ENCODE measurements at regions of chr7 and their contacts with region 1.

Region 1: DNA sequence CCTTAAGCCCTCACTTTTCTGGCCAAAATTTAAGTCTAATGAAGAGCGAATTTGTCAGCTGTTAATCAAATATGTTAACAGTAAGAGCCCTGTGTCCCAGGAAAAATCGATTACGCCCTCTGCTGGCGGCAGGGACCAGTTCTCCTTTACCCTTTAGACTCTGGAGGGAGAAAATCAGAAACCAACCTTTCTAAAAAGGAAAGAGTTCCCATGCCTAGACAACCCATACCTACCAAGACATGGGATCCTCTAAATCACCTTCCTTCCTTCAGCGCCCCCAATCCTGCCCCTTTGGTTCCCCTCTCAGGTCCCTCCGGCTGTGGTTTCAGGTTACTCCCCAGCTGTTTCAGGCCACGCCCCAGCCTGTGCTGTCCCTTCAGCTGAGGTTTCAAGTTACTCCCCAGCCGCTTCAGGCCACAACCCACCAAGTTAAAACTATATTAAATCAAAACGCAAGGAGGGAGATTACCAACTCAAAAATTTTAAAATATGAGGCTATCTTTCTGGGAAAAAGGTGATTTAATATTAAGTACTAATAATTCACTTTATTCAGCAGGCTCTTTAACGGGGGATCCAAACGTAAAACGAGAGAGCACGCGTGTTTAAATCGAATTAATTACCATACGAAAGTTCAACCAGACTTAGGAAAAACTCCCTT is 1.4 kb upstream of the AKR1B15 start:
- DNase-seq: peak; percentile 77 to 82
- ATAC-seq: peak; percentile 78 to 80
- H3K4me3 ChIP-seq: peak overlapping the region; percentile 34 to 54 (median 43)
- H3K27ac ChIP-seq: peak overlapping the region; percentile 73 to 88 (median 82)
- H3K4me1 ChIP-seq: peaks cover 28 to 36% of the 10 kb centered on the region in 2 donors
- H3K27me3 ChIP-seq: no peaks in the 10 kb centered on the region
- CTCF ChIP-seq: peak; percentile 86 to 92 (median 90)
- POLR2A ChIP-seq: no peak

Region 2: GRCh38 chr7:134432296-134433152 is 115.0 kb before region 1 on chr7:
- in situ Hi-C with region 1: no loop called
- intact Hi-C with region 1: loop called (anchors 1 kb)
- DNase-seq: peak; percentile 67 to 81
- ATAC-seq: peak; percentile 99 to 100
- H3K4me3 ChIP-seq: peak overlapping the region; percentile 40 to 65 (median 54)
- H3K27ac ChIP-seq: peak overlapping the region; percentile 75 to 84 (median 82)
- H3K4me1 ChIP-seq: peaks cover 0 to 4% of the 10 kb centered on the region in 2 donors
- H3K27me3 ChIP-seq: no peaks in the 10 kb centered on the region
- CTCF ChIP-seq: peak; percentile 69 to 89 (median 81)
- POLR2A ChIP-seq: peak in 1 of 2 donors; percentile 56

Region 3: DNA sequence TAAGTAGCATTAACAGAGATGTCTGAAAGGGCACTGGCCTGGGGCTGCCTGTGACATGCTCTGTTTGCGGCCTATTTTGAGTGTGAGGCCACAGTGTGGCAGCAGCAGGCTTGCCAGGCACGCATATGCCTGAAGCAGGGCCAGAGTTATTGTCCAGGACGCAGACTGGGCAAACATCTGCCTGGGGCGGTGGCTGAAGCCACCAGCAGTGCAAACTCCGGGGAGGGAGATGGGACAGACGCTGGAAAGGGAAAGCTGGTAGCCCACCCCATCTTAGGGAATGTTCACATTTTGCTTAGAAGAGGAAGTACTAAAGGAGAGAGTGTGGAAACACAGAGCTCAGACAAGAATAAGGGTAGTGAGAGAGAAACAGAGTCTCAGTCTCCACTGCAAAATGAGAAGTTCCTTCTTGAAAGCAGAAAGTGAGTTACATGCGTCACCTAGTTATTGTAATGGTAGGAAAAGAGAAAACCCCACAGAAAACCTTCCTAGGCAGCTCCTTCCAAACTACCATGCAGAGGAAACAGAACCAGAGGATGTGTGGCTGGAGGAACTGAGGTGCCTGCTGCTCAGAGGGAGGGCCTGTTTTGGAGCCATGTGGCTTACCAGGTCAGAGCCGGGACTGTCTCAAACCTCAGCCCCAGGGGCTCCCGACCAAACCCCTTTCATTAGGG is 103.2 kb before region 1 on chr7:
- in situ Hi-C with region 1: loop called in 1 of 4 experiments (anchors 5 kb)
- intact Hi-C with region 1: loop called (anchors 1 kb)
- DNase-seq: peak; percentile 52 to 61
- ATAC-seq: peak; percentile 82
- H3K4me3 ChIP-seq: no peak overlapping the region
- H3K27ac ChIP-seq: peak overlapping the region; percentile 59 to 83 (median 68)
- H3K4me1 ChIP-seq: peaks cover 14 to 38% of the 10 kb centered on the region in 2 donors
- H3K27me3 ChIP-seq: no peaks in the 10 kb centered on the region
- CTCF ChIP-seq: peak in 2 of 5 experiments; percentile 39 to 56
- POLR2A ChIP-seq: no peak

Region 4: DNA sequence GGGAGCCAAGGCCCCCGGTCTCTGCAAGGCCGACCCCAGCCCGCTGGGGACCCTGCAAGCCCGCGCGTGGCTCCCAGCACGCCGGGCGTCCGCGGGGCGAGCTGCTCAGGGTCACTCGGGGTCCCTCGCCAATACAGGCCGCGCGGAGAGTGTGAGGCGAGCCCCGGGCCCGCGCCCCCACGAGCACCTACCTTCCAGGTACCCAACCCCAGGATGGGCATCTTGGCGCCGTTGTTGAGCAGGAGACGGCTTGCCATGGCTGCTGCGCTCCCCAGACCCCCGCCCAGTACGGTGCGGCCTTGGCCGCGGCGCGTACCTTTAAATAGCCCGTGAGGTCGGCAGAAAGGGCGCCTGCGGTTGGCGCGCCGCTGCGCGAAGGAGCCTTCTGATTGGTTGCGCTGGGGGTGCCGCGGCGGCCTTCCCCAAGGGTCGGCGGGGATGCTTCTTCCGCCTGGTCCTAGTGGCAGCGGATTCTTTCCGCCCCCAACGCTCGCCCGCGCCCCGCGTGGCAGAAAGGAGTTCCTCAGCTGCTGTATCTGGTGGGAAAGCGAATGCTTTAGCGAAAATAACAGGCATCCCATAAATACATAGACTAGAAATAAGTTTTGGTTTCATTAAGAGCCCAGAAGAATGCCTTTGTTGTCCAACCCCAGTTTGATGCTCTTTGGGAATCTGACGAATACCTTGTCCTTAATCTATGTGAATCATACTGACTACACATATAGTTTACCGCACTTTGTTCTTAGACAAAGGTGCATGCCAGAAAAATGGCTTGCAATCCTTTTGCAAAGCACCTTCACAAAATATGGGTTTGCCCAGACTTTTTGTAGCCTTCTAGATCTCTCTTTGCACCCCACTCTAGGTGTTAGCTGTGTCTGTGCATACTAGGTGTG is 88.5 kb before region 1 on chr7 and contains the start of gene AKR1B1:
- in situ Hi-C with region 1: no loop called
- intact Hi-C with region 1: loop called (anchors 1 kb)
- DNase-seq: peak; percentile 81 to 92
- ATAC-seq: peak; percentile 93 to 95
- H3K4me3 ChIP-seq: peak within 1 kb of the TSS; percentile 82 to 97 (median 88)
- H3K27ac ChIP-seq: peak within 1 kb of the TSS; percentile 87 to 95 (median 90)
- H3K4me1 ChIP-seq: peaks cover 13 to 26% of the 10 kb centered on the region in 2 donors
- H3K27me3 ChIP-seq: no peaks in the 10 kb centered on the region
- CTCF ChIP-seq: peak; percentile 32 to 57 (median 43)
- POLR2A ChIP-seq: peak; percentile 84
- total RNA-seq, gene AKR1B1: 87.3 to 119 (median 95.6) TPM

Region 5: GRCh38 chr7:134533288-134533771 is 14.2 kb before region 1 on chr7:
- in situ Hi-C with region 1: no loop called
- intact Hi-C with region 1: loop called (anchors 1 kb)
- DNase-seq: peak; percentile 81 to 86
- ATAC-seq: peak; percentile 82 to 83
- H3K4me3 ChIP-seq: no peak overlapping the region
- H3K27ac ChIP-seq: peak overlapping the region; percentile 88 to 92 (median 90)
- H3K4me1 ChIP-seq: peaks cover 51 to 71% of the 10 kb centered on the region in 2 donors
- H3K27me3 ChIP-seq: no peaks in the 10 kb centered on the region
- CTCF ChIP-seq: no peak
- POLR2A ChIP-seq: no peak

Region 6: GRCh38 chr7:134605973-134606923 is 58.7 kb after region 1 on chr7:
- in situ Hi-C with region 1: loop called in 1 of 4 experiments (anchors 5 kb)
- intact Hi-C with region 1: loop called (anchors 2 kb)
- DNase-seq: peak; percentile 34 to 38
- ATAC-seq: peak; percentile 89 to 90
- H3K4me3 ChIP-seq: peak overlapping the region in 2 of 4 donors; percentile 12 to 27
- H3K27ac ChIP-seq: no peak overlapping the region
- H3K4me1 ChIP-seq: no peaks in the 10 kb centered on the region
- H3K27me3 ChIP-seq: no peaks in the 10 kb centered on the region
- CTCF ChIP-seq: peak; percentile 81 to 98 (median 89)
- POLR2A ChIP-seq: no peak

Region 7: DNA sequence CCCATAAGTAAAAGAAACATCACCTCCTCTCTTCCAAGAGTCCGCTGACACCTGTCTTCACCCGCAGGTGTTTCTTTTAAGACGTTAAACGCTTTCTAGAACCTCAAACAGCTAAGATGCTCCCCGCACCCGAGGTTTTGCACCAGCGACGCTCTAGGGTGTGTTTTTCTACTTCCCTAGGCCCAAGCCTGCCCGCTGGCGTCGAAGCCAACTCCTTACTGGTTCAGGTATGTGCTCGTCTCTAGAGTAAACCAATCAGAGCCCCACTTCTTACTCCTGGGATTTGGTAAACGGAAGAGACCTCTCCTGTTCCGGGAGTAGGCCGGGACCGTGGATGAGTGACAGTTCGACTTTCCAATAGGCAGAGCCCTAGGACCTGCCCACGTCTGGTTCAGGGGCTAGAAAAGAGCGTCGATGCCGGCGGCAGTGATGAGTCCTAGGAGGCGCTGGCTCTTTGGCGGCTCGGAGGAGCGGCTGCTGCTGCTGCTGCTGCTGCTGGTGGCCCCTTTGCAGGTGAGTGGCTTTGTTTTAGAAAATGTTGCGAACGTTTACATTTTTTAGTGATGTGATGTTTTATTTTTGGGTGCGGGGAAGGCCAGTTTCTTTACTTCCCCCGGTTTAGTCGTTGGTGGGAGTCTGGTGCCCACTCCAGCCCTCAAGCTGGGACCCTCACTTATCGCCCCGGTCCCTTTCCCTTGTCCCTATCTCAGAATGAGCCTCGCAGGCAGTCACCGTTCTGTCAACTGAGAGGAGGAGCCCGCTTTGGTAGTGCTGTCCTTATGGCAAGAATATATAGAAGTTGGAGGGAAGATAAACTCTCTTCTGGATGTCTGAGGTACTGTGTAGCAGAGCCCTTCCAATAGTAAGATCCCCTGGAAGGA is 99.1 kb after region 1 on chr7 and contains the start of gene BPGM:
- in situ Hi-C with region 1: no loop called
- intact Hi-C with region 1: loop called (anchors 5 kb)
- DNase-seq: peak; percentile 98 to 99
- ATAC-seq: peak; percentile 100
- H3K4me3 ChIP-seq: peak within 1 kb of the TSS; percentile 61 to 85 (median 76)
- H3K27ac ChIP-seq: peak within 1 kb of the TSS; percentile 81 to 89 (median 85)
- H3K4me1 ChIP-seq: peaks cover 17 to 20% of the 10 kb centered on the region in 2 donors
- H3K27me3 ChIP-seq: no peaks in the 10 kb centered on the region
- CTCF ChIP-seq: peak in 1 of 5 experiments; percentile 10
- POLR2A ChIP-seq: peak; percentile 89 to 98
- total RNA-seq, gene BPGM: 11.3 to 24.5 (median 13.6) TPM

Measured in gastrocnemius medialis (tissue), 4 donors.